ENCODE measurements at regions of chr1 and their contacts with region 1.

Region 1: GRCh38 chr1:167220537-167221125 is at the start of gene POU2F1:
- DNase-seq: peak; percentile 100
- ATAC-seq: peak; percentile 76
- H3K4me3 ChIP-seq: peak within 1 kb of the TSS; percentile 94
- H3K27ac ChIP-seq: peak within 1 kb of the TSS; percentile 97
- H3K4me1 ChIP-seq: peaks cover 28% of the 10 kb centered on the region
- H3K27me3 ChIP-seq: no peaks in the 10 kb centered on the region
- CTCF ChIP-seq: peak; percentile 69
- total RNA-seq, gene POU2F1: 8.7 and 17.9 TPM in 2 replicates

Region 2: GRCh38 chr1:166910396-166910994 is 310.1 kb before region 1 on chr1:
- CTCF ChIA-PET with region 1: interaction called, 5 read pairs
- POLR2A ChIA-PET with region 1: no interaction called
- intact Hi-C with region 1: loop called (anchors 5 kb)
- DNase-seq: peak; percentile 97
- ATAC-seq: peak; percentile 93
- H3K4me3 ChIP-seq: no peak overlapping the region
- H3K27ac ChIP-seq: no peak overlapping the region
- H3K4me1 ChIP-seq: peaks cover 21% of the 10 kb centered on the region
- H3K27me3 ChIP-seq: no peaks in the 10 kb centered on the region
- CTCF ChIP-seq: peak; percentile 93

Region 3: GRCh38 chr1:167086033-167086432 is 134.6 kb before region 1 on chr1:
- CTCF ChIA-PET with region 1: interaction called, 11 read pairs
- POLR2A ChIA-PET with region 1: no interaction called
- intact Hi-C with region 1: no loop called
- DNase-seq: no peak
- ATAC-seq: no peak
- H3K4me3 ChIP-seq: no peak overlapping the region
- H3K27ac ChIP-seq: no peak overlapping the region
- H3K4me1 ChIP-seq: peaks cover 15% of the 10 kb centered on the region
- H3K27me3 ChIP-seq: no peaks in the 10 kb centered on the region
- CTCF ChIP-seq: no peak

Region 4: DNA sequence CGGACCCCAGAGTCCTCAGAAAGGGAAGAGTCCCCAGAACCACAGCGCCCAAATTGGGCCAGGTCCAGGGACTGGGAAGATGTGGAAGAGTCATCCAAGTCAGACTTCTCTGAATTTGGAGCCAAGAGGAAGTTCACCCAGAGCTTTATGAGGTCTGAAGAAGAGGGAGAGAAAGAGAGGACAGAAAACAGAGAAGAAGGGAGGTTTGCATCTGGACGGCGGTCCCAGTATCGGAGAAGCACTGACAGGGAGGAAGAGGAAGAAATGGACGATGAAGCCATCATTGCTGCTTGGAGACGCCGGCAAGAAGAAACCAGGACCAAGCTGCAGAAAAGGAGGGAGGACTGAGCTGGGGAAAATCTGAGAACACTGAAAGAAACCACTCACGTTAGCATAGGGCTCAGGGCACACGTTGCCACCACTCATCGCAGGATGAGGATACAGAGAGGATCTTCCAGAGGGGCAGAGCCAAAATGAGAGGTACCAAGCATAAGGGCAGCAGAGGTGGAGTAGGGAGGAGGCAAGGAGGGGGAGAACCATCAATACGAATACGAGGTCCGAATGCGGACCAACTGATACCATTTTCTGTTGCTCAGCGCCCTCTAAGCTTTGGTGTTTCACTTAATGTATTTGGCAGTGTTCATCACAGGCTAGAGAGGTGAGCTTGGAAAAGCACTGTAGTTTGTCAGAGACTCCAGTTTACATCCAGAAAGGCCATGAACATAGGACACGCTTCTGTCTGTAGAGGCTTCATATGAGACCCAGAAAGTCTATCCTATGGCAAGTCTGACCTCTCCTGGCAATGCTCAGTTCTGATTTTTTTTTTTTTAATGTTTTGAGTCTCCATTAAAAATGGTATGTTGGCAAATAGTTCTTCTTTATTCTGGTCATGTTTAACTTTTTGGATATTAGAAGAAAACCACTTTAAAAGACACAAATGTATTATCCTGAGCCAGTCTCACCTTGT is 92.1 kb before region 1 on chr1:
- CTCF ChIA-PET with region 1: interaction called, 12 read pairs
- POLR2A ChIA-PET with region 1: no interaction called
- intact Hi-C with region 1: loop called (anchors 5 kb)
- DNase-seq: peak; percentile 50
- ATAC-seq: peak; percentile 51
- H3K4me3 ChIP-seq: no peak overlapping the region
- H3K27ac ChIP-seq: no peak overlapping the region
- H3K4me1 ChIP-seq: no peaks in the 10 kb centered on the region
- H3K27me3 ChIP-seq: peaks cover 6% of the 10 kb centered on the region; the same call in 1 of the 2 replicates
- CTCF ChIP-seq: peak; percentile 60; the same call in 1 of the 2 replicates

Region 5: DNA sequence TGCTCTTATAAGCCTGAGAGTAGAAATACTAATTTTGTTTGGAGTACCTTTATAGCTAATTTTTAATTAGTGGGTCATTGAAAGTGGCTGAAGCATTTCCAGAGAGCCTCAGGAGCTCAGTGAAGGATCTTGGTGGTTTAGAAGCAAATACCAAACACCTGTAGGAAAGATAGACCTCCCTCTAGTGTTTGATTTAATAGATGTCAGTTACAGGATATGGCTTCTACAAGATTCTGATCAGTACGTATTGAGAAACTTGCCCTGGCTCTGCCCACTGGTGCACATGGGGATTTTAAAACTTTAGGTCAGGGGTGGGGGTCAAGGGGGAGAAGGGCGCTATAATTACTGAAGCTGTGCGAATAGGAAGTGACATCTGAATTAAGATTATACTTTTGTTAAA is 122.2 kb after region 1 on chr1:
- CTCF ChIA-PET with region 1: interaction called, 8 read pairs
- POLR2A ChIA-PET with region 1: no interaction called
- intact Hi-C with region 1: loop called (anchors 5 kb)
- DNase-seq: peak; percentile 58
- ATAC-seq: peak; percentile 87
- H3K4me3 ChIP-seq: no peak overlapping the region
- H3K27ac ChIP-seq: no peak overlapping the region
- H3K4me1 ChIP-seq: no peaks in the 10 kb centered on the region
- H3K27me3 ChIP-seq: no peaks in the 10 kb centered on the region
- CTCF ChIP-seq: peak; percentile 60

Region 6: GRCh38 chr1:167533851-167534300 is 313.2 kb after region 1 on chr1:
- CTCF ChIA-PET with region 1: no interaction called
- POLR2A ChIA-PET with region 1: no interaction called
- intact Hi-C with region 1: loop called (anchors 5 kb)
- DNase-seq: peak; percentile 90
- ATAC-seq: peak; percentile 98
- H3K4me3 ChIP-seq: no peak overlapping the region
- H3K27ac ChIP-seq: no peak overlapping the region
- H3K4me1 ChIP-seq: no peaks in the 10 kb centered on the region
- H3K27me3 ChIP-seq: 0 out of 2 replicates have a peak, but pooled peaks cover 5% of the 10 kb centered on the region
- CTCF ChIP-seq: peak; percentile 97